GM12878 (cell line): ENCODE measurements at regions of chr14 and their contacts with region 1.

Region 1: GRCh38 chr14:61703342-61704129 is 8.2 kb downstream of the HIF1A start:
- DNase-seq: no peak
- ATAC-seq: peak; percentile 54
- H3K4me3 ChIP-seq: 0 out of 2 replicates have a peak overlapping the region, but pooled peaks have one; percentile 18
- H3K27ac ChIP-seq: no peak overlapping the region; the same call in 1 of the 2 replicates
- H3K4me1 ChIP-seq: peaks cover 9% of the 10 kb centered on the region; the same call in 1 of the 2 replicates
- H3K27me3 ChIP-seq: no peaks in the 10 kb centered on the region
- CTCF ChIP-seq: no peak
- EP300 ChIP-seq: no peak
- POLR2A ChIP-seq: no peak
- RAD21 ChIP-seq: no peak

Region 2: DNA sequence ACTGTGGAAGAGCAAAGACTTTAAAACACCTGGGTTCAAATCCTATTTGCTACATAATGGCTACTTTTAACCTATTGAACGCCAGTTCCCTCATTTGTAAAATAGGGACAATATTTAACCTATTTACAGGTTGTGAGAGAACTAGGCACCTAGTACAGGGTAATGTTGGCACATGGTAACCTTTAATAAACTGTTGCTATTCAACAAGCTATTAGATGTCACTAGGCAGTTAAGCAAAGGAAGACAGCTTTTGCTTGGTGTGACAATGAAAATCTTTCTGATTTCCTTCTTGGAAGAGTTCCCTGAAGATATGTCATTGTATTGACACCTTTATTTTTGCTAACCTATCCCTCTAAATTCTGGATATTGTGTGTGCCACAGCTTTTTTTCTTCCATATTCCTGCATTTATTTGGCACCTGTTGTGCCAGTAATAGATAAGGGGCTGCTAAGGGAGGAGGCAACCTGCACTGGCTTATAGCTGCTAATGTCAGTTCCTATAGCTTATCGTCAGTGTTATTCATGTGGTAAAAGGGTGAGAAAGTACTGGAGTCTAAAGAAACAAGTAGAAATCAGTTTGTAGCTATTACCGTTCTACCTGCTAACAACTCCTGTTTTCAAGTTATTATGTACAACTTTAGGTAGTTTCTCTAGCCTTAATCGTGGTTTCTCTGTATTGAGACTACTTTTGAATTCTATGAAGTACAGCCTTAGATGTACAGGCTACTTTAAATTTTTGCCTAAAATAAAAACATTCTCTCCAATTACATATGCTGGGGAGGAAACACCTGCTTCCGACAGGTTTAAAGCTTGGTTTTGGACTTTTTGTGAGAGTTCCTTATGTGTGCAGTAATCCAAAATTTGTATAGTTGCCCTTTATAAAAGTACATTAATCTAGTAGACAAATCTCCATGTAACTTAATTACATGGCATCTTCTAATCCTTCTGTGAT is 16.1 kb after region 1 on chr14:
- CTCF ChIA-PET with region 1: interaction called, 10 read pairs
- POLR2A ChIA-PET with region 1: interaction called, 13 read pairs
- RAD21 ChIA-PET with region 1: interaction called, 28 read pairs
- SMC1A ChIA-PET with region 1: interaction called, 57 read pairs
- in situ Hi-C with region 1: no loop called
- intact Hi-C with region 1: no loop called
- DNase-seq: no peak
- ATAC-seq: peak; percentile 48
- H3K4me3 ChIP-seq: no peak overlapping the region; the same call in 1 of the 2 replicates
- H3K27ac ChIP-seq: peak overlapping the region; percentile 15; the same call in 1 of the 2 replicates
- H3K4me1 ChIP-seq: peaks cover 20% of the 10 kb centered on the region
- H3K27me3 ChIP-seq: no peaks in the 10 kb centered on the region
- CTCF ChIP-seq: no peak
- EP300 ChIP-seq: no peak
- POLR2A ChIP-seq: no peak
- RAD21 ChIP-seq: no peak

Region 3: GRCh38 chr14:61737915-61738314 is 34.4 kb after region 1 on chr14:
- CTCF ChIA-PET with region 1: interaction called, 3 read pairs
- POLR2A ChIA-PET with region 1: interaction called, 10 read pairs
- RAD21 ChIA-PET with region 1: interaction called, 4 read pairs
- SMC1A ChIA-PET with region 1: interaction called, 10 read pairs
- in situ Hi-C with region 1: no loop called
- intact Hi-C with region 1: no loop called
- DNase-seq: no peak
- ATAC-seq: no peak
- H3K4me3 ChIP-seq: no peak overlapping the region
- H3K27ac ChIP-seq: no peak overlapping the region
- H3K4me1 ChIP-seq: no peaks in the 10 kb centered on the region
- H3K27me3 ChIP-seq: no peaks in the 10 kb centered on the region
- CTCF ChIP-seq: no peak
- EP300 ChIP-seq: no peak
- POLR2A ChIP-seq: no peak
- RAD21 ChIP-seq: no peak

Region 4: DNA sequence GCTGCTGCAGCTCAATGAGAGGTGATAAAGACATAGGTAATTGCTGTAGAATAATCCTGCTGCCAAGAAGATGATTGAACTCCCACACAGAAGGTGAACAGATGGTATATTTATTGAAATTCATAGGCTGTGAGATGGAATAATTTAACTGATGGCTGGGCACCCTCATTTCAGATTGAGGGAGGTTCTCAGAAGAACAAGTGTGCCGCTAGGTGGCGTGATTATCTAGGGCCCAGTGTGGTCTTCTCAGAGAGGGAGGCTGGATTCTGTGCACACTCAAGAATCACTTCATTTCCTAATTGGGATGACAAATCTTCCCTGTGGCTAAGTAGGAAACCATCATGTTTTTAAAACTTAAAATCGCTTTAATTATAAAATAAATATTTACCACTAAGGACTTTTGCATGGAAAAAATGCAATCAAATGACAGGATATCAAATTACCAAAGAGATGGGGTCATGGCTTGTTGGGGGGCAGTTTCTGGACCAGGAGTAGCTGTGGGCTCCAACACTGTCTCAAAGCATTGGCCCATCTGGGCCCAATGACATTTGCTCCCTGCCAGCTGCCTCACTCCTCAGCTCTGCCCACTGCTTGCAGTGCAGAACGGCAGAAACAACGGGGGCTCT is 191.0 kb after region 1 on chr14:
- CTCF ChIA-PET with region 1: no interaction called
- POLR2A ChIA-PET with region 1: no interaction called
- RAD21 ChIA-PET with region 1: no interaction called
- SMC1A ChIA-PET with region 1: no interaction called
- in situ Hi-C with region 1: no loop called
- intact Hi-C with region 1: no loop called
- DNase-seq: no peak
- ATAC-seq: peak; percentile 69
- H3K4me3 ChIP-seq: no peak overlapping the region
- H3K27ac ChIP-seq: no peak overlapping the region
- H3K4me1 ChIP-seq: peaks cover 11% of the 10 kb centered on the region
- H3K27me3 ChIP-seq: no peaks in the 10 kb centered on the region
- CTCF ChIP-seq: peak; percentile 69 to 77 (median 69)
- EP300 ChIP-seq: no peak
- POLR2A ChIP-seq: no peak
- RAD21 ChIP-seq: peak; percentile 80